Tibial artery (tissue), 4 donors: ENCODE measurements at regions of chr21 and their contacts with region 1.

Region 1: GRCh38 chr21:42125571-42126544 is 54.7 kb downstream of the UMODL1 start:
- DNase-seq: no peak
- H3K4me3 ChIP-seq: no peak overlapping the region
- H3K27ac ChIP-seq: no peak overlapping the region
- H3K4me1 ChIP-seq: peaks cover 0 to under 1% (median 0%) of the 10 kb centered on the region in 4 donors
- H3K27me3 ChIP-seq: peaks cover 0 to 76% of the 10 kb centered on the region in 2 donors
- CTCF ChIP-seq: no peak

Region 2: DNA sequence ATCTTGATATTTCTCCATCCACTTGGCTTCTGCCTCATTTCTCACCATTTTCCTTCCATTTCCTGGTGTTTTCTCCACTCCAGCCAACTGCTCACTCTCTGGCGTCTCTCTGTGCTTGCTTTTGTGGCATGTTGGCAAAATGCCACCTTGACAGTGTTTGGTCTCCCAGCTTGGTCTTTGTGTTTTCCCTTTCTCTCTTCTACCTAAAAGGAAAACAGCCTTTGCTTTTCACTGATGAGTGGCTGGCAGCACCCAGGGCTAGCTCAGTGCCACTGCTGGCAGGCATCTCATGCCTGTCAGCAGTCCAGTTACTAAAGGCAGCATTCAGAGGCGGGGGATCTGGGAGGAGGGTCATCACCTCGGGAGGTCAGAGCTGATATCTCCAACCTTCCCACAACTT is 1223.6 kb before region 1 on chr21:
- intact Hi-C with region 1: no loop called
- DNase-seq: no peak
- H3K4me3 ChIP-seq: no peak overlapping the region
- H3K27ac ChIP-seq: no peak overlapping the region
- H3K4me1 ChIP-seq: no peaks in the 10 kb centered on the region
- H3K27me3 ChIP-seq: no peaks in the 10 kb centered on the region
- CTCF ChIP-seq: no peak

Region 3: DNA sequence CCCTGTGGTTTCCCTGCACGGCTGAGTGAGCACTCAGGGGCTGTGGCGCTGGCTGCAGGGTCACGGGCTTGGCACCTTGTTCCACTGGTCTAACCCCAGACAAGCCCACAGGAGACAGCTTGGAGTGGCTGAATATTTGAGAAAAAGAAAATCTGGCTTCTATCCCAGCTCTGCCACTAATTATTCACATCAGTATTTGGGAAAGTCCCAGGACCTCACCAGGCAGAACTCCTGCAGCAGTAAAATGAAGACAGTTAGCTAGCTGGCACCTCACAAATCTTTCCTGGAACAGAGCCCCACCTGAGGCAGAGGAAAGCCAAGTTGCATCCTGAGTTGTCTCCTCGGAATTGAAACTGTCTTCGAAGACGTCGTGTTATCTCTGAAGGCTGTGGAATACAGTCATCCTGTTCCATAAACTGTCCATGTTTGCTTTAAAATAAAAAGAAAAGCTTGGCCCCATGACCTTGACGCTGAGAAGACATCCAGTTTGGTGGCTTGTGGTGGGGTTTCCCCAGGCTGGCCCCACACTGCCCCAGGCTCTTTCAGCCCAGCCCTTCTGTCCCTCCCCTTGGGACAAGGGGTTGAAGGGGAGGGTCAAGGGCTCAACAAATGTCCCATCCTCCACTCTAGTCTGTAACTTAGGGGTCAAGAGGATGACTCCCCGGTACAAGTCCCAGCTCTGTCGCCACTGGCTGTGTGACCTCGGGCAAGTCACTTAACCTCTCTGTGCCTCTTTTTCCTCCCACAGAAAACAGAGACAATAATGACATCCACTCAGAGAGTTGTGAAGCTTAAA is 524.1 kb before region 1 on chr21:
- intact Hi-C with region 1: loop called (anchors 10 kb)
- DNase-seq: peak; percentile 5 to 32
- H3K4me3 ChIP-seq: no peak overlapping the region
- H3K27ac ChIP-seq: no peak overlapping the region
- H3K4me1 ChIP-seq: peaks cover 0 to 10% (median 3%) of the 10 kb centered on the region in 4 donors
- H3K27me3 ChIP-seq: peaks cover 0 to 4% of the 10 kb centered on the region in 2 donors
- CTCF ChIP-seq: no peak